Activated CD4-positive, alpha-beta memory T cell treated with anti-CD3 and anti-CD28 coated beads for 36 hours (primary cell): ENCODE measurements at regions of chr13 and their contacts with region 1.

Region 1: GRCh38 chr13:48431987-48432615 is 19.2 kb upstream of the LPAR6 start:
- DNase-seq: no peak
- H3K4me3 Mint-ChIP-seq: peak overlapping the region; percentile 20
- H3K27ac Mint-ChIP-seq: peak overlapping the region; percentile 45
- H3K4me1 Mint-ChIP-seq: peaks cover 57% of the 10 kb centered on the region
- H3K27me3 Mint-ChIP-seq: no peaks in the 10 kb centered on the region

Region 2: GRCh38 chr13:48412881-48413351 is 19.2 kb before region 1 on chr13 and contains the start of gene LPAR6:
- CTCF ChIA-PET with region 1: interaction called, 4 read pairs
- POLR2A ChIA-PET with region 1: no interaction called
- intact Hi-C with region 1: loop called (anchors 2 kb)
- DNase-seq: peak; percentile 23
- H3K4me3 Mint-ChIP-seq: peak within 1 kb of the TSS; percentile 94
- H3K27ac Mint-ChIP-seq: peak within 1 kb of the TSS; percentile 97
- H3K4me1 Mint-ChIP-seq: peaks cover 41% of the 10 kb centered on the region
- H3K27me3 Mint-ChIP-seq: no peaks in the 10 kb centered on the region
- total RNA-seq, gene LPAR6: 8.8 TPM